Uterus (tissue), 4 donors: ENCODE measurements at regions of chr9 and their contacts with region 1.

Region 1: GRCh38 chr9:76827286-76828080 is 63.2 kb downstream of the PCA3 start:
- DNase-seq: no peak
- H3K4me3 ChIP-seq: no peak overlapping the region
- H3K27ac ChIP-seq: peak overlapping the region; percentile 31 to 64
- H3K4me1 ChIP-seq: no peaks in the 10 kb centered on the region
- H3K27me3 ChIP-seq: no peaks in the 10 kb centered on the region
- CTCF ChIP-seq: no peak
- POLR2A ChIP-seq: no peak

Region 2: GRCh38 chr9:76634356-76635022 is 193.0 kb before region 1 on chr9:
- intact Hi-C with region 1: no loop called
- DNase-seq: no peak
- H3K4me3 ChIP-seq: no peak overlapping the region
- H3K27ac ChIP-seq: no peak overlapping the region
- H3K4me1 ChIP-seq: no peaks in the 10 kb centered on the region
- H3K27me3 ChIP-seq: no peaks in the 10 kb centered on the region
- CTCF ChIP-seq: no peak
- POLR2A ChIP-seq: no peak

Region 3: DNA sequence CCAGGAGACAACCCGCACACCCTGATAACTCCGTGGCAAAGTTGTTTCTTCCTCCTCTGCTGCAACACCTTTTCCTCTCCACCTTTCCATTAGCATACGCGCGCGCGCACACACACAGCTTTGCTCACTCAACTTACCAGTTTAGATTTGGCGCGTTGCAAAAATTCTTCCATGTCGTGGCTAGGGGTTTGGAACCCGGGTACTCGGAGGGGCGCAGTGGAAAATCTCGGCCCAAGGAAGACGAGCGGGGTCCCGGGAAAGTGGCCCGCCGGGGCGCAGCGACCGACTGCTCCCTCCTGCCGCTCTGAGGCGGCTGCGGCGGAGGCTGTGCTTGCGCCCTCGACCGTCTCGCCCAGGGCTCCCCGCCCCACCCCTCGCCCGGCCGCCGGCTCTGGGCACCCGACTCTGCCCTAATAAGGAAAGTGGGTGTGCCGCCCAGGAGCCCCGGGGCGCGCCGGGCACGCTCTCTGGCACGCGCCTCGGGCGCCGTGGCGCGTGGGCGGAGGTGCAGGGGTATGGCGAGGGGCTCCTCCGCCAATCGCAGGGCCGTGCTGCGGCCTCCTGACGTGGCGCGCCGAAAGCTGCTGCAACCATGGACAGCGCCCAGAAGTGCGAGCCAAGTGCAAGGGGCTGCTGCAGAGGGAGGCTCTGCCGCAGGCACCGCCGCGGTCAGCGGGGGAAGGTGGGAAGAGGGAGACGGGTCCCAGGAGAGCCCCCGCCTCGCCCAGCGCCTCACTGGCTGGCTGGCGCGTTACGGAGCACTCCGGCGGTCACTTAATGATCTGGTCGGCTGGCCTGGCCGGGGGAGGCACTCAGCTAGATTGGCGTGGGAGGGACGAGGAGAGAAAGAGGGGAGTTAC is 78.5 kb after region 1 on chr9 and contains the start of gene PRUNE2:
- intact Hi-C with region 1: loop called (anchors 10 kb)
- DNase-seq: peak; percentile 84
- H3K4me3 ChIP-seq: peak within 1 kb of the TSS; percentile 43 to 51
- H3K27ac ChIP-seq: peak within 1 kb of the TSS; percentile 79 to 91
- H3K4me1 ChIP-seq: no peaks in the 10 kb centered on the region
- H3K27me3 ChIP-seq: no peaks in the 10 kb centered on the region
- CTCF ChIP-seq: no peak
- POLR2A ChIP-seq: peak; percentile 31 to 74
- total RNA-seq, gene PRUNE2: 51.4 to 187 (median 97.1) TPM